HepG2 (cell line): ENCODE measurements at regions of chr9 and their contacts with region 1.

Region 1: GRCh38 chr9:7500521-7500920 is 299.1 kb downstream of the DMAC1 start:
- DNase-seq: no peak
- ATAC-seq: no peak
- H3K4me3 ChIP-seq: no peak overlapping the region
- H3K27ac ChIP-seq: no peak overlapping the region
- H3K4me1 ChIP-seq: no peaks in the 10 kb centered on the region
- H3K27me3 ChIP-seq: no peaks in the 10 kb centered on the region
- CTCF ChIP-seq: no peak
- EP300 ChIP-seq: no peak
- POLR2A ChIP-seq: no peak
- RAD21 ChIP-seq: no peak

Region 2: DNA sequence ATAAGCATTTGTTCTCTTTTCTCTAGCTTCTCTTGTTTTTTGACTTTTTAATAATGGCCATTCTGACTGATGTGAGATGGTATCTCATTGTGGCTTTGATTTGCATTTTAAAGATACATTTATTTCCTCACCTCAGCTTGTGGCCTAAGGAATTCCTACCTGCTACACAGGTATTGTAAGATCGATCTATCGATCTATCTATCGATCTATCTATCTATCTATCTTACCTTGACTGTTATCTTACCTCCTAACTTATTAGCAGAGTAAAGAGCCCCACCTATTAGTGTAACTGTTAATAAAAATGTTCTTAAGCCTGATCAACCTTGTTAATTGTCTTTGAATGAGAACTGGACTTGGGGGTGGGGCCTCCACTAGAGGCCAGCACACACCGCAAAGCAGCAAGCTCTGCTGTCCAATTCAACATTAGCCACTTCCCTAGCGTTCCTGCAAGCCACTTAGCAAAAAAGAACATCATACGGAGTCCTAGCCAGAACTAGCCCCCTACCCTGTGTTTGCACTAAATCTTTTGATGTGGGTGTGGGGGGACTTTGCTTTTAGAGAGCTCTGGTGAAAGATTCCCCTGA is 227.0 kb before region 1 on chr9:
- CTCF ChIA-PET with region 1: no interaction called
- POLR2A ChIA-PET with region 1: no interaction called
- in situ Hi-C with region 1: loop called (anchors 25 kb)
- intact Hi-C with region 1: no loop called
- DNase-seq: no peak
- ATAC-seq: peak; percentile 73
- H3K4me3 ChIP-seq: no peak overlapping the region
- H3K27ac ChIP-seq: no peak overlapping the region
- H3K4me1 ChIP-seq: no peaks in the 10 kb centered on the region
- H3K27me3 ChIP-seq: peaks cover 0 to 6% of the 10 kb centered on the region in 2 experiments; a peak in 2 of 5 replicates
- CTCF ChIP-seq: peak; percentile 51
- EP300 ChIP-seq: no peak
- POLR2A ChIP-seq: no peak
- RAD21 ChIP-seq: no peak

Region 3: GRCh38 chr9:7601739-7602138 is 101.2 kb after region 1 on chr9:
- CTCF ChIA-PET with region 1: no interaction called
- POLR2A ChIA-PET with region 1: no interaction called
- in situ Hi-C with region 1: no loop called
- intact Hi-C with region 1: no loop called
- DNase-seq: no peak
- ATAC-seq: no peak
- H3K4me3 ChIP-seq: no peak overlapping the region
- H3K27ac ChIP-seq: no peak overlapping the region
- H3K4me1 ChIP-seq: no peaks in the 10 kb centered on the region
- H3K27me3 ChIP-seq: no peaks in the 10 kb centered on the region
- CTCF ChIP-seq: no peak
- EP300 ChIP-seq: no peak
- POLR2A ChIP-seq: no peak
- RAD21 ChIP-seq: no peak